AG04450 (cell line): ENCODE measurements at regions of chr2 and their contacts with region 1.

Region 1: DNA sequence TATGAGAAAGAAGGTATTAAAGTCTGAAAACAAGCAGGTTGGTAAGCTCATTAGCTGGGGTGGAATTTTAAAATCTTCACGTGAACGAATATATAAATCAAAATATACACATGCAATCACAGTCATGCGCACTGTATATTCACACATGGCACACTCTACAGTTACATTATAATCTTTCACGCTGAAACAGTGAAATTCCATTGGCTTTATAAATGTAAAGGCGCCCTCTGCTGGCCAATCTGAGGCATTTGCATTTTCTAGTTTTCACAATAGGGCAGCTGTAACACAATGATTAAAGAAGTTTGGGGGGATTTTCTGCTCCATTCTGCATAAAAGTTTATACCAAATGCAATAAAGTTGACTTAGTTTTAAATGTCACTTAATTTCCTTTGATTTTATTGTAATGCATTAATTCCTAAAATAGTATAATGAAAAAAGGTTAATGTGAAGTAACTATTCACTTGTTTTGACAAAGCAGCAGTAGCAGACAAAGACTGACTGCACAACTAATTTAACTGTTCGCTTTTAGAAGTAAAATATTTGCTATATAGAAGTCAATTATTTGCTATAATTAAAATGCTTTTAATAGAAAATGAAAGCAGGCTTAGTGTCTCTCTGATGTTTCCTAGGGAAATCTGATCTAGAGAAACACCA is 17.2 kb downstream of the IFIH1 start:
- DNase-seq: peak; percentile 55
- H3K4me3 ChIP-seq: no peak overlapping the region
- H3K27ac ChIP-seq: no peak overlapping the region
- H3K27me3 ChIP-seq: no peaks in the 10 kb centered on the region
- CTCF ChIP-seq: peak; percentile 83

Region 2: GRCh38 chr2:162123806-162124758 is 177.2 kb before region 1 on chr2:
- CTCF ChIA-PET with region 1: interaction called, 73 read pairs
- POLR2A ChIA-PET with region 1: no interaction called
- DNase-seq: no peak
- H3K4me3 ChIP-seq: no peak overlapping the region
- H3K27ac ChIP-seq: no peak overlapping the region
- H3K27me3 ChIP-seq: no peaks in the 10 kb centered on the region
- CTCF ChIP-seq: peak; percentile 60

Region 3: DNA sequence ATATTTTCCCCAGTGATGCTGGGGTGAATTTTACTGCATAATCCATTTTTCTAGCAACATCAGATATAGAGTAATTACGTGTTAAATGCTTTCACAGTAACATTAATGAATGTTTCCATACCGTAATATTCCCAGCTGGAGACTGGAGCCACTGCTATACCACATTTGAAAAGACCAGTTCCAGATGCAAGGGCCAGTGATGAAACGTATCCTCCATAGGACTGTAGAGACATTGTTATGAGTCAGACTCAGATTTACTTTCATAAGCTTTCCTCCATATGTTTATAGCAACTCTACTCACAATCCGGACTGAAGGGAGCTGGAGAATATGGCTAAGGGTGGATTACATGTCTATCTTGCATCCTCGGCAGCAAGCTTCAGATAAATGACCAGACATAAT is 126.5 kb before region 1 on chr2:
- CTCF ChIA-PET with region 1: interaction called, 12 read pairs
- POLR2A ChIA-PET with region 1: no interaction called
- DNase-seq: peak; percentile 29
- H3K4me3 ChIP-seq: no peak overlapping the region
- H3K27ac ChIP-seq: peak overlapping the region; percentile 33
- H3K27me3 ChIP-seq: no peaks in the 10 kb centered on the region
- CTCF ChIP-seq: no peak

Region 4: DNA sequence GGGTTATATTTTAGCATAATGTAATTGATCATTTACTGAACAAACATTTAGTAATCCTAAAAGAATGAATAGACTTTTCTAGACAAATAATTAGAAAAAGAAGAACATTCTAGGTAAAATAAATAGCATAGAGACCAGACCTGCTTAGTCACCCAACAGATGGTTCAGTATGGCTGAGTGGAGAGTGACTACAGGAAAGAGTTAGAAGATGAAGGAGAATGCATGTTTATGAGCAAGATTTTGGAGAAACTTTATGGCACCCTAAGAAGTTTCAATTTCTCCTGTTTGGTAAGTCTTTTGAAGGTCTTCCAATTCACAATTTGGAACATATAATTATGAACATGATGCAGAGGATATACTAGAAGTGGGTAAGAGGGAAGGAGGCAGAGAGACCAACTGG is 90.9 kb before region 1 on chr2:
- CTCF ChIA-PET with region 1: interaction called, 18 read pairs
- POLR2A ChIA-PET with region 1: no interaction called
- DNase-seq: peak; percentile 44
- H3K4me3 ChIP-seq: no peak overlapping the region
- H3K27ac ChIP-seq: peak overlapping the region; percentile 0
- H3K27me3 ChIP-seq: no peaks in the 10 kb centered on the region
- CTCF ChIP-seq: no peak

Region 5: GRCh38 chr2:162252153-162252552 is 49.1 kb before region 1 on chr2:
- CTCF ChIA-PET with region 1: interaction called, 10 read pairs
- POLR2A ChIA-PET with region 1: no interaction called
- DNase-seq: no peak
- H3K4me3 ChIP-seq: no peak overlapping the region
- H3K27ac ChIP-seq: no peak overlapping the region
- H3K27me3 ChIP-seq: no peaks in the 10 kb centered on the region
- CTCF ChIP-seq: no peak

Region 6: GRCh38 chr2:162363361-162363760 is 62.1 kb after region 1 on chr2:
- CTCF ChIA-PET with region 1: no interaction called
- POLR2A ChIA-PET with region 1: no interaction called
- DNase-seq: no peak
- H3K4me3 ChIP-seq: no peak overlapping the region
- H3K27ac ChIP-seq: no peak overlapping the region
- H3K27me3 ChIP-seq: no peaks in the 10 kb centered on the region
- CTCF ChIP-seq: no peak

Region 7: GRCh38 chr2:162623888-162624287 is 322.6 kb after region 1 on chr2:
- CTCF ChIA-PET with region 1: no interaction called
- POLR2A ChIA-PET with region 1: no interaction called
- DNase-seq: no peak
- H3K4me3 ChIP-seq: no peak overlapping the region
- H3K27ac ChIP-seq: no peak overlapping the region
- H3K27me3 ChIP-seq: no peaks in the 10 kb centered on the region
- CTCF ChIP-seq: no peak